Naive thymus-derived CD4-positive, alpha-beta T cell (primary cell): ENCODE measurements at regions of chr19 and their contacts with region 1.

Region 1: DNA sequence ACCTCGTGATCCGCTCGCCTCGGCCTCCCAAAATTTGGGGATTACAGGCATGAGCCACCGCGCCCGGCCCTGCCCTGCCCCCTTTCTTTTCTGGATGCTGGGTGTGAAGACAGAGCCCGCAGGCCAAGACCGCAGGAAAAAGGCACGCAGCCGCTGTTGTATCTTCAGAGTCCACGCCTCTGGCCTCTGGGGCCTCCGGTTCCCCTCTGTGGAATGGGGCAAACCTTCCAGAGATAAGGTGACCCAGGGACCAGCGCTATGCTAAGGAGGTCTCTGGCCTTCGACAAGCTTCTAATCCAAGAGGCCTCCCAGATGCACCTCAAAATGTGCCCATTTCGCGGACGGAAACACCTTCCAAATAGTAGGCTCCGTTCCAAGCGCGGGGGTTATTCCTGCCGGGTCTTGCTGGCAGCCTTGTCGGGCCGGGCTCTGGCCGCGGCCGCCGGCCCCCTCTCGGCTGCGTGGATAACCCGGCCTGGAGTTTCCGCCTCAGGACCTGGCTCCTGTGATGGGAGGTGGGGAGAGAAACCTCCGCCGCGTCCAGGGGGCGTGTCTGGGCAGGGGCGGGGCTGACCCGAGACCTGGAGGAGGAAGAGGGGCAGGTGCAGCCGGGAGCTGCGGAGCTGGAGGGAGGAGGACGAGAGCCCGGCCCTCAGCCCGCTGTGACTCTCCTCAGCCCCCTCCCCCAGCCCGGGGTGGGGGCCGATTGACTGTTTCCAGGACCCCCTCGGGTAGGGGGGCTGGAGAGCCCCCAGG is 13.1 kb downstream of the TJP3 start:
- DNase-seq: peak; percentile 72 to 88 (median 83)
- ATAC-seq: peak; percentile 99
- H3K4me3 ChIP-seq: peak overlapping the region; percentile 61
- H3K4me3 Mint-ChIP-seq: peak overlapping the region; percentile 68 to 87 (median 81)
- H3K27ac ChIP-seq: no peak overlapping the region
- H3K27ac Mint-ChIP-seq: peak overlapping the region in 1 of 9 donors; percentile 4
- H3K4me1 ChIP-seq: peaks cover 9 to 15% of the 10 kb centered on the region in 2 donors
- H3K4me1 Mint-ChIP-seq: peaks cover 0 to 21% (median 8%) of the 10 kb centered on the region in 7 donors
- H3K27me3 ChIP-seq: peaks cover 0 to 3% of the 10 kb centered on the region in 2 donors
- H3K27me3 Mint-ChIP-seq: peaks cover 0 to 54% (median 0%) of the 10 kb centered on the region in 5 donors

Region 2: GRCh38 chr19:3536429-3537100 is 184.7 kb before region 1 on chr19:
- CTCF ChIA-PET with region 1: no interaction called
- POLR2A ChIA-PET with region 1: no interaction called
- intact Hi-C with region 1: no loop called
- DNase-seq: no peak
- ATAC-seq: no peak
- H3K4me3 ChIP-seq: no peak overlapping the region
- H3K4me3 Mint-ChIP-seq: no peak overlapping the region
- H3K27ac ChIP-seq: no peak overlapping the region
- H3K27ac Mint-ChIP-seq: peak overlapping the region in 1 of 9 donors; percentile 52
- H3K4me1 ChIP-seq: no peaks in the 10 kb centered on the region
- H3K4me1 Mint-ChIP-seq: peaks cover 0 to 2% (median 0%) of the 10 kb centered on the region in 7 donors
- H3K27me3 ChIP-seq: no peaks in the 10 kb centered on the region
- H3K27me3 Mint-ChIP-seq: no peaks in the 10 kb centered on the region

Region 3: GRCh38 chr19:3670796-3671679 is 50.3 kb before region 1 on chr19:
- CTCF ChIA-PET with region 1: no interaction called
- POLR2A ChIA-PET with region 1: no interaction called
- intact Hi-C with region 1: no loop called
- DNase-seq: peak in 1 of 9 donors; percentile 49
- ATAC-seq: peak; percentile 72
- H3K4me3 ChIP-seq: no peak overlapping the region
- H3K4me3 Mint-ChIP-seq: peak overlapping the region in 8 of 10 donors; percentile 53 to 81 (median 58)
- H3K27ac ChIP-seq: peak overlapping the region; percentile 3
- H3K27ac Mint-ChIP-seq: peak overlapping the region in 3 of 9 donors; percentile 66 to 77 (median 72)
- H3K4me1 ChIP-seq: peaks cover 9 to 14% of the 10 kb centered on the region in 2 donors
- H3K4me1 Mint-ChIP-seq: peaks cover 5 to 25% (median 21%) of the 10 kb centered on the region in 7 donors
- H3K27me3 ChIP-seq: no peaks in the 10 kb centered on the region
- H3K27me3 Mint-ChIP-seq: no peaks in the 10 kb centered on the region

Region 4: DNA sequence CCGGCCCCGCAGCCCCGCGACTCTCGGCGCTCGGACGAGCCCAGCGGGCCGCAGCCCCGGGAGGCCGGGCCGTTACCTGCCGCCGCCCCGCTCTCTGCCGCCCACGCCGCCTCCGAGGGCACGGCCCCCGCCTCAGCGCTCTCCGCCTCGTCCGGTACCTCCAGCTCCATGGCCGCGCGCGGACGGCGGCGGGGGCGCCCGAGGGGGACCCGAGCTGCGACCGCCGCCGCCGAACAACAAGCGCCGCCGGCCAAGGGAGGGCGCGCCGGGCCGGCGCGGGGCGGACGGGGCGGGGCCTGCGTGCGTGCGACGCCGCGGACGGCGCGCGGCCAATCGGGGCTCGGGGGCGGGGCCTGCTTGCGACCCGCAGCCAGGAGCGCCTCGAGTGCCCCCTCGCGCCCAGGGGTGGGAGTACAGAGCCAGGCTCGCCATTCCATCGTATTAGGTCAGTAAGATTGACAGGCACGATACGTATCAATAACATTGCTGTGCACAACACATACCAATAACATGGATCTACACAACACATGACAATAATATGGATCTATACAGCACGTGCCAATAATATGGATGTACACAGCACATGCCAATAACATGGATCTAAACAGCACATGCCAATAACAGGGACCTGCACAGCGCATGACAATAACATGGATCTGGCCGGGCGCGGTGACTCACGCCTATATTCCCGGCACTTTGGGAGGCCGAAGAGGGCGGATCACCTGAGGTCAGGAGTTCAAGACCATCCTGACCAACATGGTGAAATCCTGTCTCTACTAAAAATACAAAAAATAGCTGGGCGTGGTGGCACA is 20.9 kb before region 1 on chr19 and contains the start of gene PIP5K1C:
- CTCF ChIA-PET with region 1: interaction called, 3 read pairs
- POLR2A ChIA-PET with region 1: no interaction called
- intact Hi-C with region 1: loop called in 1 of 2 experiments (anchors 2 kb)
- DNase-seq: peak; percentile 82 to 98 (median 90)
- ATAC-seq: peak; percentile 100
- H3K4me3 ChIP-seq: peak within 1 kb of the TSS; percentile 66
- H3K4me3 Mint-ChIP-seq: peak within 1 kb of the TSS; percentile 88 to 97 (median 92)
- H3K27ac ChIP-seq: peak within 1 kb of the TSS; percentile 67
- H3K27ac Mint-ChIP-seq: peak within 1 kb of the TSS in 8 of 9 donors; percentile 60 to 91 (median 82)
- H3K4me1 ChIP-seq: peaks cover 0 to 9% of the 10 kb centered on the region in 2 donors
- H3K4me1 Mint-ChIP-seq: peaks cover 6 to 41% (median 28%) of the 10 kb centered on the region in 7 donors
- H3K27me3 ChIP-seq: no peaks in the 10 kb centered on the region
- H3K27me3 Mint-ChIP-seq: peaks cover 0 to 6% (median 0%) of the 10 kb centered on the region in 5 donors
- total RNA-seq, gene PIP5K1C: 21.5 to 32.4 (median 30.7) TPM